ENCODE measurements at regions of chr19 and their contacts with region 1.

Region 1: DNA sequence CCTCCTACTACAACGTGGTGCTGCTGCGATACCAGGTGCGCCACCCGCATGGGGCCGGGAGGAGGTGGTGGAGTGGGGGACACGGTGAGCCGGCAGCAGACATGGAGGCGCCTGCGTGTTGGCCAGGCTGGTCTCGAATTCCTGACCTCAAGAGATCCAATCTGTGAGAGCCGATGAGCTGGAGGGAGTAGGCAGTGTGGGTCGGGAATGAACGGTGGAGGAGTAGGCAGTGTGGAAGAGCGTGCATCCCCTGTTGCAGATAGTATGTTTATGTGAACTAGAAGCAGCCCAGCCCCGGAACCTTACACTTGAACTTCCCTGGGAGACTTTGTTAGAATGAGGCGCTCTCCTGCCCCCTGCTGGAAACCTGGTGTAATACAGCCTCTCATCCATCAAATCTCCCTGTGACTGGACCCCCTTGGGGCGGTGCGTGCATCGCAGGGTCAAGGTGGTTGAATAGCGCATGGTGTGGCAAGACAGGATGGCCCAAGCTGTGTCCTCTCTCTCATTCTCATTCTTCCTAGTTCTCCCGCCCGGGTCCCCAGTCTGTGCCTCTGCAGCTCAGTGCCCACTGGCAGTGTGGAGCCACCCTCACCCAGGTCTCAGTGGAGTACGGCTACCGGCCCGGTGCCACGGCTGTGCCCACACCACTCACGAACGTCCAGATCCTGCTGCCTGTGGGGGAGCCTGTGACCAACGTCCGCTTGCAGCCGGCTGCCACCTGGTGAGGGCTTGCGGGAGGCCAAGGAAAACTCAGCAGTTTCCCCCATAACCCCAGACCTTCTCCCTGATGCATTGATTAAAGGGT is 10.5 kb upstream of the B3GNT3 start:
- DNase-seq: peak; percentile 55
- H3K4me3 ChIP-seq: no peak overlapping the region
- H3K27ac ChIP-seq: no peak overlapping the region
- H3K4me1 ChIP-seq: no peaks in the 10 kb centered on the region
- H3K27me3 ChIP-seq: no peaks in the 10 kb centered on the region
- CTCF ChIP-seq: peak; percentile 74 to 82
- POLR2A ChIP-seq: no peak

Region 2: GRCh38 chr19:17794731-17795536 is 10.5 kb after region 1 on chr19 and contains the start of gene B3GNT3:
- CTCF ChIA-PET with region 1: interaction called, 17 read pairs
- POLR2A ChIA-PET with region 1: no interaction called
- dilution Hi-C with region 1: no loop called
- intact Hi-C with region 1: no loop called
- DNase-seq: no peak
- H3K4me3 ChIP-seq: peak within 1 kb of the TSS in 1 of 3 experiments; percentile 16
- H3K27ac ChIP-seq: no peak within 1 kb of the TSS
- H3K4me1 ChIP-seq: peaks cover 3% of the 10 kb centered on the region
- H3K27me3 ChIP-seq: peaks cover 13 to 14% of the 10 kb centered on the region in 2 experiments
- CTCF ChIP-seq: no peak
- POLR2A ChIP-seq: no peak
- total RNA-seq, gene B3GNT3: not detected in 2 replicates

Region 3: DNA sequence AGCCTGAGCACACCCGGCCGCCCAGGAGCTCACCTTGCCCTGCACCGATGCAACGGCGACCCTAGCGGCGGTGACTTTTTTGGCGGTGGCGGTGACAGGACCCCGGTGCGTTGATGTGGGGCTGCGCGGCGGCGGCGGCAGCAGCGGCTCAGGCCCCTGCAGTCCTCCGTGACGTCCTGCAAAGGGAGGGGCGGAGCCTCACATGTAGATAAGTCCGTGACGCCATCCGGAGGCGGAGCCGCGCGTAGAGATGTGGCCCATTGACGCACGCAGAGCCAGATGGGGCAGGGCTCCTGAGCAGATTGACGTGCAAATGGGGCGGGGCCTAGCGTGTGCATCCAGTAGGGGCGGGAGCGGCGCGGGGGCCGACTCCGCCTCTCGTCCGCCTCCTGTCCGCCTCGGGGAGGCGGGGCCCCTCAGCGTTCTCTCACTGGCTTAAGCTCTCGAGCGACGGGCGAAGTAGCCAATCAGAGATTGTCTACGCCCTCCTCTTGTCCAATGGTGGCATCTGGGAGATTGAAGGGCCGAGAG is 419.5 kb after region 1 on chr19 and contains the start of gene RAB3A:
- CTCF ChIA-PET with region 1: no interaction called
- POLR2A ChIA-PET with region 1: no interaction called
- dilution Hi-C with region 1: no loop called
- intact Hi-C with region 1: no loop called
- DNase-seq: peak; percentile 100
- H3K4me3 ChIP-seq: peak within 1 kb of the TSS; percentile 46 to 81 (median 75)
- H3K27ac ChIP-seq: peak within 1 kb of the TSS; percentile 88
- H3K4me1 ChIP-seq: peaks cover 10% of the 10 kb centered on the region
- H3K27me3 ChIP-seq: peaks cover 0 to 2% of the 10 kb centered on the region in 2 experiments
- CTCF ChIP-seq: no peak
- POLR2A ChIP-seq: no peak
- total RNA-seq, gene RAB3A: 0.88 and 1.9 TPM in 2 replicates